Posterior vena cava (tissue), 2 donors: ENCODE measurements at regions of chr12 and their contacts with region 1.

Region 1: GRCh38 chr12:113439606-113440030 is 17.4 kb downstream of the SDSL start:
- DNase-seq: peak; percentile 62

Region 2: GRCh38 chr12:114238781-114239180 is 799.2 kb after region 1 on chr12:
- intact Hi-C with region 1: loop called in 1 of 2 experiments (anchors 5 kb)
- DNase-seq: no peak